ENCODE measurements at regions of chr9 and their contacts with region 1.

Region 1: GRCh38 chr9:121463026-121463807 is 36.4 kb downstream of the GGTA1 start:
- DNase-seq: peak; percentile 46
- ATAC-seq: no peak
- H3K4me3 ChIP-seq: no peak overlapping the region
- H3K4me3 Mint-ChIP-seq: no peak overlapping the region
- H3K27ac ChIP-seq: no peak overlapping the region
- H3K27ac Mint-ChIP-seq: no peak overlapping the region
- H3K4me1 ChIP-seq: no peaks in the 10 kb centered on the region
- H3K4me1 Mint-ChIP-seq: no peaks in the 10 kb centered on the region
- H3K27me3 ChIP-seq: peaks cover 0 to 18% (median 5%) of the 10 kb centered on the region in 4 experiments
- H3K27me3 Mint-ChIP-seq: peaks cover 51% of the 10 kb centered on the region
- CTCF ChIP-seq: peak; percentile 80

Region 2: DNA sequence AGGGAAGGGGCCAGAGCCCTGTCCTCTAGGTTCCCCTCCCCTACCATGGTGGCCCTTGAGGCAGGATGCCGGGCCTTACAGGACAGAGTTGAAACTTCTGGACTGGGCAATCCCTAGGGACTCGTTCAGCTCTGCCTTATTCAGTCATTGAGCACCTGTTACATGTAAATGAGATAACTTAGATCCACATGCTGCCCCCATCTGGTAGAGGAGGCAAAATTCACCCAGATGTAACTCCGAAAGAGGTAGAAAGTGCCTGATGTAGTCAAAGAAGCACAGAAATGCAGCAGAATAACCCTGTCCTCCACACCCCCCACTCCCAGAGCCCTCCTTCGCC is 34.9 kb after region 1 on chr9:
- CTCF ChIA-PET with region 1: interaction called, 7 read pairs
- POLR2A ChIA-PET with region 1: no interaction called
- intact Hi-C with region 1: loop called (anchors 1 kb)
- DNase-seq: peak; percentile 86
- ATAC-seq: peak; percentile 84
- H3K4me3 ChIP-seq: peak overlapping the region; percentile 29 to 58 (median 45)
- H3K4me3 Mint-ChIP-seq: peak overlapping the region; percentile 85
- H3K27ac ChIP-seq: no peak overlapping the region
- H3K27ac Mint-ChIP-seq: no peak overlapping the region
- H3K4me1 ChIP-seq: peaks cover 36 to 37% of the 10 kb centered on the region in 2 donors
- H3K4me1 Mint-ChIP-seq: peaks cover 45% of the 10 kb centered on the region
- H3K27me3 ChIP-seq: peaks cover 0 to 33% (median 16%) of the 10 kb centered on the region in 4 experiments
- H3K27me3 Mint-ChIP-seq: peaks cover 39% of the 10 kb centered on the region
- CTCF ChIP-seq: peak; percentile 82

Region 3: GRCh38 chr9:121807823-121808278 is 344.6 kb after region 1 on chr9:
- CTCF ChIA-PET with region 1: no interaction called
- POLR2A ChIA-PET with region 1: no interaction called
- intact Hi-C with region 1: no loop called
- DNase-seq: no peak
- ATAC-seq: no peak
- H3K4me3 ChIP-seq: no peak overlapping the region
- H3K4me3 Mint-ChIP-seq: no peak overlapping the region
- H3K27ac ChIP-seq: no peak overlapping the region
- H3K27ac Mint-ChIP-seq: no peak overlapping the region
- H3K4me1 ChIP-seq: no peaks in the 10 kb centered on the region
- H3K4me1 Mint-ChIP-seq: no peaks in the 10 kb centered on the region
- H3K27me3 ChIP-seq: peaks cover 0 to 3% (median 0%) of the 10 kb centered on the region in 4 experiments
- H3K27me3 Mint-ChIP-seq: peaks cover 3% of the 10 kb centered on the region
- CTCF ChIP-seq: no peak